ENCODE measurements at regions of chrX and their contacts with region 1.

Region 1: GRCh38 chrX:8815464-8816065 is 14.4 kb upstream of the FAM9A start:
- DNase-seq: peak in 6 of 9 donors; percentile 7 to 44 (median 28)
- ATAC-seq: no peak
- H3K4me3 ChIP-seq: no peak overlapping the region
- H3K4me3 Mint-ChIP-seq: no peak overlapping the region
- H3K27ac ChIP-seq: no peak overlapping the region
- H3K27ac Mint-ChIP-seq: no peak overlapping the region
- H3K4me1 ChIP-seq: no peaks in the 10 kb centered on the region
- H3K4me1 Mint-ChIP-seq: no peaks in the 10 kb centered on the region
- H3K27me3 ChIP-seq: no peaks in the 10 kb centered on the region
- H3K27me3 Mint-ChIP-seq: peaks cover 0 to 9% (median 0%) of the 10 kb centered on the region in 5 donors

Region 2: GRCh38 chrX:8743126-8743732 is 72.3 kb before region 1 on chrX:
- CTCF ChIA-PET with region 1: no interaction called
- POLR2A ChIA-PET with region 1: no interaction called
- intact Hi-C with region 1: loop called (anchors 1 kb)
- DNase-seq: peak; percentile 23 to 68 (median 43)
- ATAC-seq: no peak
- H3K4me3 ChIP-seq: no peak overlapping the region
- H3K4me3 Mint-ChIP-seq: no peak overlapping the region
- H3K27ac ChIP-seq: no peak overlapping the region
- H3K27ac Mint-ChIP-seq: no peak overlapping the region
- H3K4me1 ChIP-seq: no peaks in the 10 kb centered on the region
- H3K4me1 Mint-ChIP-seq: no peaks in the 10 kb centered on the region
- H3K27me3 ChIP-seq: no peaks in the 10 kb centered on the region
- H3K27me3 Mint-ChIP-seq: peaks cover 0 to 6% (median 4%) of the 10 kb centered on the region in 5 donors

Measured in naive thymus-derived CD4-positive, alpha-beta T cell (primary cell).